ENCODE measurements at regions of chr6 and their contacts with region 1.

Region 1: GRCh38 chr6:111997078-111997852 is 56.6 kb upstream of the CCN6 start:
- DNase-seq: peak; percentile 59 to 91 (median 82)
- ATAC-seq: peak; percentile 71
- H3K4me3 ChIP-seq: peak overlapping the region in 1 of 2 experiments; percentile 13
- H3K4me3 Mint-ChIP-seq: peak overlapping the region; percentile 71
- H3K27ac ChIP-seq: no peak overlapping the region
- H3K27ac Mint-ChIP-seq: peak overlapping the region; percentile 89
- H3K4me1 ChIP-seq: peaks cover 37% of the 10 kb centered on the region
- H3K4me1 Mint-ChIP-seq: peaks cover 45% of the 10 kb centered on the region
- H3K27me3 ChIP-seq: no peaks in the 10 kb centered on the region
- H3K27me3 Mint-ChIP-seq: no peaks in the 10 kb centered on the region
- CTCF ChIP-seq: peak; percentile 98

Region 2: GRCh38 chr6:111564482-111564945 is 432.8 kb before region 1 on chr6:
- CTCF ChIA-PET with region 1: no interaction called
- POLR2A ChIA-PET with region 1: no interaction called
- intact Hi-C with region 1: no loop called
- DNase-seq: no peak
- ATAC-seq: no peak
- H3K4me3 ChIP-seq: no peak overlapping the region
- H3K4me3 Mint-ChIP-seq: no peak overlapping the region
- H3K27ac ChIP-seq: no peak overlapping the region
- H3K27ac Mint-ChIP-seq: peak overlapping the region; percentile 4
- H3K4me1 ChIP-seq: peaks cover 27% of the 10 kb centered on the region
- H3K4me1 Mint-ChIP-seq: peaks cover 49% of the 10 kb centered on the region
- H3K27me3 ChIP-seq: no peaks in the 10 kb centered on the region
- H3K27me3 Mint-ChIP-seq: no peaks in the 10 kb centered on the region
- CTCF ChIP-seq: no peak

Region 3: DNA sequence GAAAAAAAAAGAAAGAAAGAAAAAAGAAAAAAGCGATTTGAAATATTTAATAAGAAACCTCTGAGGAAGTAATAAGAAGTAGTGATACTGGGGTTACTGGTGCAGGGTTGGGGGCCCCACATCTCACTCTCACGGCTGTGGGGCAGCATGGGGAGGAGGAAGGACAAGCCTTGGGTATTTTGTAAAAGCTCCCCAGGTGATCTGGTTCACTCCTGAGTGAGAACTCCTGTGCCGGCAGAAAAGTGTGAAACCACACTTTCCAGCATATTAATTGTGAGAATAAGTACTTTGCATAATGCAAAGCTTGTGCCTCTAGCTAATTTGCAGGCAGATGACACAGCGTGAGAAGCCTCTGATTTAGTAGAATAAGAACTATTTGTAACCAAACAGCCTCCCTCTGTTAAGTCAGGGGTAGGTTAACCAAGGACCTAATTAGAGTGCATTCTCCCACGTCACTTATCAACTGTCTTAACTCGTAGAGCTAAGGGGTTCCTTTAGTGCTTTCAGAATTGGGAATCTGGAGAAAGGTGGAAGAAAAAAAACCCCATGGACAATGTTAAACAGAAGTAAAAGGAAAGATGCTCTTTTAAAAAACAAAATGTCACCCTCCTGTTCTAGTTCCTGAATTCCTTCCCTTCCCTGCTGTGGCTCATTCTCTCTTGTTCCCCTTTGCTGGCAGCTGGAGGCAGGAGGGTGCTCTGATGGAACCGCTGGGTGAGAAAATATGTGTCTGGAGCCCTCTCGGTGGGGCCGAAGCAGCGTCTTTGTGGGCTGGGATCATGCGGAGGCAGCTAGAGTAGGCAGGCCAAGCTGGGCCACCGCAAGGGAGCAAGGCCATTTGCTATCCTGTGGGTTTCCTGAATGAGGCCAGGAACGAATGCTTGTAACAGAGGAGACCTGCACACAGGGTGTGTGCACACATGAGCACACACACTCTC is 232.8 kb before region 1 on chr6:
- CTCF ChIA-PET with region 1: interaction called, 4 read pairs
- POLR2A ChIA-PET with region 1: interaction called, 8 read pairs
- intact Hi-C with region 1: loop called in 1 of 2 experiments (anchors 1 kb)
- DNase-seq: peak in 7 of 9 experiments; percentile 45 to 92 (median 70)
- ATAC-seq: peak; percentile 41
- H3K4me3 ChIP-seq: peak overlapping the region in 1 of 2 experiments; percentile 4
- H3K4me3 Mint-ChIP-seq: peak overlapping the region; percentile 70
- H3K27ac ChIP-seq: peak overlapping the region; percentile 41 to 99
- H3K27ac Mint-ChIP-seq: peak overlapping the region; percentile 99
- H3K4me1 ChIP-seq: peaks cover 98% of the 10 kb centered on the region
- H3K4me1 Mint-ChIP-seq: peaks cover 99% of the 10 kb centered on the region
- H3K27me3 ChIP-seq: no peaks in the 10 kb centered on the region
- H3K27me3 Mint-ChIP-seq: no peaks in the 10 kb centered on the region
- CTCF ChIP-seq: no peak

Region 4: DNA sequence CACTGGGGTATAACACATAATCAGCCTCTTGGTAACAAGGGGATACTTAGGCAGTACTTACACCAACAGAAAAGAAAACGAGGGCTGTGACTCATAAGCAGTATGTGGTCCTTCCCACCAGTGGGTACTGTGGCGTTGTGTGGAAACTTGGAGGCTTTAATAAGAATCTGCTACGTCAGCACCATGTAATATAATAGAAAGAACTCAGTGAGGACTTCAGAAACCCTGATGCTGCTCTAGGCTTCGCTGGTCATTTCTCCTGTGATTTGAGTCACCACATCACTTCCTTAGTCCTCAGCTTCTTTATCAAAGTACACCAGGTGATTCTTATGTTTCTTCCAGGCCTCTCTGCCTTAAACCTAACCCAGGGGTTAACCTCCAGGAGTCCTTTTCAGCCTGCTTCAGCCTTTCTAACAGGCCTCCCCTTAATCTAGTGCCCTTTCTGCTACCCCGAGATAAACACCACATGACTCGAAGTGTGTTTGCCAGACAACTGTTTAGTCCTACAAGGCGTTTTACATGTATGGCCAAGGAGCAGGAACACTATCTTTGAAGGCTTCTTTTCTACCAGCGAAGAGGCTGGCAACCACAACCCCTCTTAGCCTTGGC is 192.5 kb before region 1 on chr6:
- CTCF ChIA-PET with region 1: interaction called, 8 read pairs
- POLR2A ChIA-PET with region 1: no interaction called
- intact Hi-C with region 1: loop called (anchors 1 kb)
- DNase-seq: peak; percentile 27 to 92 (median 62)
- ATAC-seq: peak; percentile 73
- H3K4me3 ChIP-seq: no peak overlapping the region
- H3K4me3 Mint-ChIP-seq: peak overlapping the region; percentile 60
- H3K27ac ChIP-seq: peak overlapping the region; percentile 16 to 84
- H3K27ac Mint-ChIP-seq: peak overlapping the region; percentile 97
- H3K4me1 ChIP-seq: peaks cover 70% of the 10 kb centered on the region
- H3K4me1 Mint-ChIP-seq: peaks cover 95% of the 10 kb centered on the region
- H3K27me3 ChIP-seq: no peaks in the 10 kb centered on the region
- H3K27me3 Mint-ChIP-seq: no peaks in the 10 kb centered on the region
- CTCF ChIP-seq: peak; percentile 53

Region 5: DNA sequence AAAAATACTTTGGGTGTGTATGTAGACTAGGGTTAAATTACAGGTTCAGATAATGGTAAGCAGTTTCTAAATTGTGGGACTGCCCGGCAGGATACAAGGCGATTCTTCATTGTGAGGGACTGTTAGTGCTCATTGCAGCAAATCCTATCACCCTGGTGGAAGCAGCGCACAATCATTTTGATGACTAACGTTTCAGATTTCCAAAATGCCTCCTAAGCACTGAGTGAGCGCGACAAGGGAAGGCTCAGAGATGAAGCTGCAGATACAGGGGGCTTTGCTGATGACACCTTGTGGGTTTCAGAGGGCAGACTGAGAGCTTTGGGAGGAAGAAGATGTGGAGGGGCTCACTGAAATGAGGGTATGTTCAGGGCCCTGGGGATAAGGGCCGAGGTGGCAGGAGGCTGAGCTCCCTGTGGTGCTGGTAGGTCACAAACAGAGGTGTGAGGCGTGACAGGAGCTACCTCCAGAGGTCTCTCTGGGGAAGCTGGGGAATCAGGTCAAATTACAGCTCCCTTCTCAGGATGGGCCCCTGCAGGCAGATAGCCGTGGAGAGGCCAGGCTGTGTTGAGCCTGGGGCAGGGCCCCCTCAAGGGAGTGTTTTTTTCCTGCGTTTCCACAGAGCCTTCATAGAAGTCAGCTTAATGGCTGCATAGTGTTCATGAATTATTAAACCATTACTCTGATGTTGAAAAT is 39.5 kb before region 1 on chr6:
- CTCF ChIA-PET with region 1: interaction called, 3 read pairs
- POLR2A ChIA-PET with region 1: no interaction called
- intact Hi-C with region 1: loop called in 1 of 2 experiments (anchors 5 kb)
- DNase-seq: peak in 1 of 9 experiments; percentile 3
- ATAC-seq: no peak
- H3K4me3 ChIP-seq: no peak overlapping the region
- H3K4me3 Mint-ChIP-seq: no peak overlapping the region
- H3K27ac ChIP-seq: no peak overlapping the region
- H3K27ac Mint-ChIP-seq: no peak overlapping the region
- H3K4me1 ChIP-seq: no peaks in the 10 kb centered on the region
- H3K4me1 Mint-ChIP-seq: no peaks in the 10 kb centered on the region
- H3K27me3 ChIP-seq: no peaks in the 10 kb centered on the region
- H3K27me3 Mint-ChIP-seq: no peaks in the 10 kb centered on the region
- CTCF ChIP-seq: no peak

Region 6: DNA sequence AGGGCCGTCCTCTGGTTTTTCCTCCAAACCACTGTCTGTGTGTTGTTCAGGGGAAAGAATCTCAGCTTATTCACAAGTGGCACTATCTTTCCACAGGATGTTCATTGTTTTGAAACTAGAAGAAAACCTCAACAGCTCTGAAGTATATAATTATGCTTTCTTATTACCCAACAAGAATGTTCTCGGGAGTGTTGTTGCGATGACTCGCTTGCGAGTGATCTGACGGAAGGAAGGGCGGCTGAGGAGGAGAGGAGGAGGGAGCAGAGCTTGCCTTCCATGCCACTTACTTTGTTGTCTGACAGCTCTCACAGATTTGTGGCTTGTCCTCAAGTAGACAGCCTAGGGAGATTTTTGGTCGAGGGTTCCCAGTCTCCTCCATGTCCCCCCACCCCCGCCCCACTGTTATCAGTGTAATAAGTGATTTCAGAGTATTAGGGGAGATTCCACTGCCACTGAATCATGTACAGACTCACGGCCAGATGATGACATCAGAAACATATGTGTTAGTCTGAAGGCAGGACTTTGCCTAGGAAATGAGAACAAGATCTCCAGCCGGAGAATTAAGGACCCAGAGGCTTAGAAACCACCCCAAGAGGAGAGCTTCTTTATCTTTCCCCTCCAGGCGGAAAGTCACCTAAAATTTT is 24.0 kb before region 1 on chr6:
- CTCF ChIA-PET with region 1: interaction called, 12 read pairs
- POLR2A ChIA-PET with region 1: interaction called, 7 read pairs
- intact Hi-C with region 1: no loop called
- DNase-seq: peak; percentile 22 to 86 (median 69)
- ATAC-seq: peak; percentile 92
- H3K4me3 ChIP-seq: no peak overlapping the region
- H3K4me3 Mint-ChIP-seq: peak overlapping the region; percentile 56
- H3K27ac ChIP-seq: peak overlapping the region; percentile 71 to 78
- H3K27ac Mint-ChIP-seq: peak overlapping the region; percentile 97
- H3K4me1 ChIP-seq: peaks cover 70% of the 10 kb centered on the region
- H3K4me1 Mint-ChIP-seq: peaks cover 69% of the 10 kb centered on the region
- H3K27me3 ChIP-seq: no peaks in the 10 kb centered on the region
- H3K27me3 Mint-ChIP-seq: no peaks in the 10 kb centered on the region
- CTCF ChIP-seq: no peak

Region 7: GRCh38 chr6:112010328-112010727 is 13.1 kb after region 1 on chr6:
- CTCF ChIA-PET with region 1: interaction called, 19 read pairs
- POLR2A ChIA-PET with region 1: no interaction called
- intact Hi-C with region 1: no loop called
- DNase-seq: peak in 3 of 9 experiments; percentile 45 to 63 (median 61)
- ATAC-seq: peak; percentile 57
- H3K4me3 ChIP-seq: no peak overlapping the region
- H3K4me3 Mint-ChIP-seq: no peak overlapping the region
- H3K27ac ChIP-seq: no peak overlapping the region
- H3K27ac Mint-ChIP-seq: no peak overlapping the region
- H3K4me1 ChIP-seq: no peaks in the 10 kb centered on the region
- H3K4me1 Mint-ChIP-seq: peaks cover 9% of the 10 kb centered on the region
- H3K27me3 ChIP-seq: no peaks in the 10 kb centered on the region
- H3K27me3 Mint-ChIP-seq: no peaks in the 10 kb centered on the region
- CTCF ChIP-seq: no peak

Region 8: GRCh38 chr6:112269114-112269513 is 271.8 kb after region 1 on chr6:
- CTCF ChIA-PET with region 1: no interaction called
- POLR2A ChIA-PET with region 1: no interaction called
- intact Hi-C with region 1: no loop called
- DNase-seq: no peak
- ATAC-seq: no peak
- H3K4me3 ChIP-seq: no peak overlapping the region
- H3K4me3 Mint-ChIP-seq: no peak overlapping the region
- H3K27ac ChIP-seq: no peak overlapping the region
- H3K27ac Mint-ChIP-seq: no peak overlapping the region
- H3K4me1 ChIP-seq: no peaks in the 10 kb centered on the region
- H3K4me1 Mint-ChIP-seq: no peaks in the 10 kb centered on the region
- H3K27me3 ChIP-seq: no peaks in the 10 kb centered on the region
- H3K27me3 Mint-ChIP-seq: peaks cover 4% of the 10 kb centered on the region
- CTCF ChIP-seq: no peak

Measured in CD8-positive, alpha-beta T cell (primary cell).